ENCODE measurements at regions of chr7 and their contacts with region 1.

Region 1: DNA sequence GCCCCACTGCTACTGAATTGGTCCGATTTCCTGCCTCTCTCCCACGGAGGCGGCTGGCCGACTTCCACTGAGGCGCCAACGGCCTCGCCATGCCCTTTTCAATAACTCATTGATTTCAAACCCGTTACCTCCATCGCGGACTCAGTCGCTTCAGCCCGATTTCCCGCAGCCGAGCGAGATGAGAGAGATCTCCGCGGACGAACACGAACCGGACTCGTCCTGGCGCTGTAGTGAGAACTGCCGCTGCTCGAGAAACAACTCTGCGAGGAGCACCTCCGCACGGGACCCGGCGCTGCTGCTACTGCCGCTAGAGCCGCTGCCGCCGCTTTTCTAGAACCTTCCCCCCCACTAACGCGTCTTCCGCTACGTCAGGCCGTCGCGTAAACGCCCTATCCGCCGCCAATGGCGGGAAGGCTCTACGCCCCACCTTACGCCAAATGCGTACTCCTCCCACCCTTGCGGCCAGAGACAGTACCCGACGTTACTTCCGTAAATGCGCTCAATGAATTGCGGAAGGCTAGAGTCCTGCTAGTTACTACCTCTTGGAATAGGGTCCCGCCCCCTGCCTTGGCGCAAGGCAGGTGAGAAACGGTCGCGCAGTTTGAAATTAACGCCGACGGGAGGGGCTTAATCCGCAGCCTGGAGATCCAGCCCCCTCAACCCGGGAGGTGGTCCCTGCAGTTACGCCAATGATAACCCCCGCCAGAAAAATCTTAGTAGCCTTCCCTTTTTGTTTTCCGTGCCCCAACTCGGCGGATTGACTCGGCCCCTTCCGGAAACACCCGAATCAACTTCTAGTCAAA is at the start of gene HNRNPA2B1:
- DNase-seq: peak; percentile 98
- H3K4me3 Mint-ChIP-seq: peak within 1 kb of the TSS; percentile 100
- H3K27ac Mint-ChIP-seq: peak within 1 kb of the TSS; percentile 100
- H3K4me1 Mint-ChIP-seq: peaks cover 38% of the 10 kb centered on the region
- H3K27me3 Mint-ChIP-seq: no peaks in the 10 kb centered on the region
- total RNA-seq, gene HNRNPA2B1: 925 to 950 TPM

Region 2: GRCh38 chr7:25857376-25857921 is 343.2 kb before region 1 on chr7:
- CTCF ChIA-PET with region 1: no interaction called
- intact Hi-C with region 1: loop called (anchors 1 kb)
- DNase-seq: no peak
- H3K4me3 Mint-ChIP-seq: no peak overlapping the region
- H3K27ac Mint-ChIP-seq: no peak overlapping the region
- H3K4me1 Mint-ChIP-seq: peaks cover 31% of the 10 kb centered on the region
- H3K27me3 Mint-ChIP-seq: peaks cover 62% of the 10 kb centered on the region

Region 3: DNA sequence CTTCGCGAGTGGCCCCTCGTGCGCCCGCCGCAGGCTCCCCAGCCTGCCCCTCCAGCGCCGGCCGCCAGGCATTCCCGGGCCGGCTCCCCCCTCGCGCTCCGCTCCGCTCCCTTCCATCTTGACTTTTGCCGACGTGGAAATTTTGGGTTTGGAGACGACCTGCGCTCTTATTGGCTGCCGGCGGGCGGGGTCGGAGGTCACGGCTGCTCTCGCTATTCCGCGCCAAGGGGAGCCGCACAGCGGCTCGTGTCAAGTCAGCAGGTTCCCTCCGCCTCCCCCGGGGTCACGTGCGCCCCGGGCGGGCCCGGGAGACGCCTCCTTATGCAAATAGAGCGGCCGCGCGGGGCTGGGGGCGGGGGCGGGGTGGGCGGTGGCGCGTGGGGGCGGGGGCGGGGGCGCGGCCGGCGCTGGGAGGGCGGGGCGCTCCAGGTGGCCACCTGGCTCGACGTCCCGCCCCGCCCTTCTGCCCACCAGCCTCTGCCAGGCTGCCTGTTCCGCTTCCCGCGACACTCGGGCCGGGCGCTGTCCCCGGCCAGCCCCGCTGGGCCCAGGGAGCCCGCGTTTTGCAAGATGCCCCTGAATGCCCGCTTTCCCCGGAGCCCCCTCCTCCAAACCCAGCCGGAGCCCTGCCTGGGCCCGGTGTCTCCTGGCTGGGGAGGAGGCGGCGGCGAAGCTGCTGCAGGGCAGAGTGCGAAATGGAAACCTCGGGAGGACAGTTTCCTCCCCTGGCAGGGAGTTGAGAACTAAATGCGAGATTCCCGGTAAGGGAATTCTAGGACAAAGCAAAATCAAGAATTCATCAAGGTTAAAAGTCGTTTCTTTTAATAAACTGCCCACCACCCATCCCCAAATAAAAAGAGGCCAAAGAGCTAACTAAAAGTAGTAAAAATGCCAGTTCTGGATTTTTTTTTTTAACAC is 249.4 kb before region 1 on chr7:
- CTCF ChIA-PET with region 1: no interaction called
- intact Hi-C with region 1: loop called (anchors 1 kb)
- DNase-seq: peak; percentile 91
- H3K4me3 Mint-ChIP-seq: peak overlapping the region; percentile 88
- H3K27ac Mint-ChIP-seq: no peak overlapping the region
- H3K4me1 Mint-ChIP-seq: peaks cover 16% of the 10 kb centered on the region
- H3K27me3 Mint-ChIP-seq: peaks cover 7% of the 10 kb centered on the region

Region 4: DNA sequence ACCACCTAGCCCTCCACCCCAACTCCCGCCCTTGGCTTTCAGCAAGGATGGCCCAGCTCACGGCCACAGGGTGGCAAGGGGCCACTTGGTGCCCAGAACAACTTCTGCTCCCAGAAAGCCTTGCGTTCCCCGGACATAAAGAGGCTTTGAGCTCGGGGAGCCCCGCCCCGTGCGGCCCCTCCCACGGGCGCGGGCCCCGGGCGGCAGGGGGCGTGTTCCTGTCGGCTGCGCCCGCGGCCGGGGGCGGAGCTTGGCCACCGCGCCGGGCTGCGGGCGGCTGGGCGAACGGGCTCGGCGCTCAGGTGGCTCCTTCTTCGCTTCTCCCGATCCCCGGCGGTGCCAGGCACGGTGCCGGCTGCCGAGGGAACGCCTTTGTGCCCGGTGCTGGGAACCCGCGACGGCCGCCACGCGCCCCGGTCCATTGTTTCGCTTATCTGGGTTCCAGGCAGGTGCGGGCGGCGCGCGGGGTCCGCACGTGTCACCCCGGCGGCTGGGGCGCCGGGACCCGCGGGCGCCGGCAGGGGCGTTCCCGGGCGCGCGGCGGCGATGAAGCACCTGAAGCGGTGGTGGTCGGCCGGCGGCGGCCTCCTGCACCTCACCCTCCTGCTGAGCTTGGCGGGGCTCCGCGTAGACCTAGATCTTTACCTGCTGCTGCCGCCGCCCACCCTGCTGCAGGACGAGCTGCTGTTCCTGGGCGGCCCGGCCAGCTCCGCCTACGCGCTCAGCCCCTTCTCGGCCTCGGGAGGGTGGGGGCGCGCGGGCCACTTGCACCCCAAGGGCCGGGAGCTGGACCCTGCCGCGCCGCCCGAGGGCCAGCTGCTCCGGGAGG is 48.5 kb before region 1 on chr7 and contains the start of gene NFE2L3:
- CTCF ChIA-PET with region 1: interaction called, 4 read pairs
- intact Hi-C with region 1: loop called (anchors 1 kb)
- DNase-seq: peak; percentile 86
- H3K4me3 Mint-ChIP-seq: peak within 1 kb of the TSS; percentile 95
- H3K27ac Mint-ChIP-seq: peak within 1 kb of the TSS; percentile 98
- H3K4me1 Mint-ChIP-seq: peaks cover 50% of the 10 kb centered on the region
- H3K27me3 Mint-ChIP-seq: no peaks in the 10 kb centered on the region
- total RNA-seq, gene NFE2L3: 12.5 to 12.9 TPM

Region 5: GRCh38 chr7:26187380-26188205 is 13.1 kb before region 1 on chr7:
- CTCF ChIA-PET with region 1: interaction called, 20 read pairs
- intact Hi-C with region 1: loop called (anchors 1 kb)
- DNase-seq: peak; percentile 47
- H3K4me3 Mint-ChIP-seq: no peak overlapping the region
- H3K27ac Mint-ChIP-seq: peak overlapping the region; percentile 85
- H3K4me1 Mint-ChIP-seq: peaks cover 75% of the 10 kb centered on the region
- H3K27me3 Mint-ChIP-seq: no peaks in the 10 kb centered on the region

Region 6: DNA sequence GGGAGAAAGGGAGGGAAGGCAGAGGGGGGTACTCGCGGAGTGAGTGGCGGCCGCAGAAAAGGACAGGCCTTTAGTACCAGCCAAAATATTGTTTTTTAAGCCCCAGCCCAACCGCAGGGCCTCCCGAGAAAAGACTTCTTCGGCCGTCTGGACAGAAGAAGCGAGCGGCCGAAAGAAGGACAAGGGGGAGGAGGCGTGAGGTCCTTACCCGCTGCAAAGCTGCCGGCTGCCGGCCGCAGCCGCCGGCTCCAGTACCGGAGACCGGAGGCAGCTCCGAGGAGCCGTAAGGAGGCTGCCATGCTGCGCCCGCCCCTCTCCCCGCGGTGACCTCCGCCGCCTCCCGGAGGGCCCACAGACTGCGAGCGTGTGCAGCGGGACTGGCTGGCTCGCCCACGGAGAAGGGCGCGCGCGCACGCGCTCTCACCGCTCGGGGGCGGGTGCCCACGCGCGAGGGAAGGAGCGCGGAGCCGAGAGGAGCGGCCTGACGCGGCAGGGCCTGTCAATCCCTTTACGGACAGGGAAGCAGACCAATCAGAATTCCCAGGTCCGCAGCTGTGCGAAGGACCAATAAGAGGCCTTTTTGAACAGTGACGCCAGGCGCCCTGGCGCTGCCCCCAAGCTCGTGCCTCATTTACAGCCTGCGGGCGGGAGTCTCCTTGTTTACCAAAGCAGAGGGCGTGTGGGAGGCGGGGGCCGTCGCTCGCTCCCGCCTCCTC is 1462.0 kb after region 1 on chr7 and contains the start of gene HIBADH:
- CTCF ChIA-PET with region 1: no interaction called
- intact Hi-C with region 1: loop called (anchors 2 kb)
- DNase-seq: peak; percentile 97
- H3K4me3 Mint-ChIP-seq: peak within 1 kb of the TSS; percentile 82
- H3K27ac Mint-ChIP-seq: peak within 1 kb of the TSS; percentile 69
- H3K4me1 Mint-ChIP-seq: peaks cover 14% of the 10 kb centered on the region
- H3K27me3 Mint-ChIP-seq: no peaks in the 10 kb centered on the region
- total RNA-seq, gene HIBADH: 20.8 to 22.5 TPM